CD14-positive monocyte (primary cell): ENCODE measurements at regions of chr2 and their contacts with region 1.

Region 1: DNA sequence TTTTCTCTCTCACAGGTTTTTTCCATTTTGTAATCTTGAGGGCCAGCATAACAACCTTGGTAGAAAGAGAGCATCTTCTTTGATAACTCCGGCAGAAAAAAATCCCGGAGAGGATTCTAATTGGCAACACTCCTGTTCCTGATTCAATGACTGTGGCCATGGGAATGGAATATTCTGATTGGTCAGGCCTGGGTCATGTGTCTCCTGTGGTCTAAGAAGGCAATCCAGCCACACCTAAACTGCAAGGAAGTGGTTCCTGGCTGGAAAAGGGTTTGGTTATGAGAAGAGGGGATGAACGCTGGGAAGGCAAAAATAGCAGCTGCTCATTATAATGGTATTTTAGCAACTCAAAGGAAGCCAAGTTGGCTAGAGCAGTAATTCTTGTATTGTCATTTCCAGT is 24.8 kb upstream of the ZNF638 start:
- DNase-seq: no peak
- H3K4me3 ChIP-seq: no peak overlapping the region
- H3K4me3 Mint-ChIP-seq: no peak overlapping the region
- H3K27ac ChIP-seq: no peak overlapping the region
- H3K27ac Mint-ChIP-seq: no peak overlapping the region
- H3K4me1 ChIP-seq: no peaks in the 10 kb centered on the region
- H3K4me1 Mint-ChIP-seq: no peaks in the 10 kb centered on the region
- H3K27me3 ChIP-seq: no peaks in the 10 kb centered on the region
- H3K27me3 Mint-ChIP-seq: peaks cover 0 to 2% (median 1%) of the 10 kb centered on the region in 3 donors
- CTCF ChIP-seq: no peak

Region 2: DNA sequence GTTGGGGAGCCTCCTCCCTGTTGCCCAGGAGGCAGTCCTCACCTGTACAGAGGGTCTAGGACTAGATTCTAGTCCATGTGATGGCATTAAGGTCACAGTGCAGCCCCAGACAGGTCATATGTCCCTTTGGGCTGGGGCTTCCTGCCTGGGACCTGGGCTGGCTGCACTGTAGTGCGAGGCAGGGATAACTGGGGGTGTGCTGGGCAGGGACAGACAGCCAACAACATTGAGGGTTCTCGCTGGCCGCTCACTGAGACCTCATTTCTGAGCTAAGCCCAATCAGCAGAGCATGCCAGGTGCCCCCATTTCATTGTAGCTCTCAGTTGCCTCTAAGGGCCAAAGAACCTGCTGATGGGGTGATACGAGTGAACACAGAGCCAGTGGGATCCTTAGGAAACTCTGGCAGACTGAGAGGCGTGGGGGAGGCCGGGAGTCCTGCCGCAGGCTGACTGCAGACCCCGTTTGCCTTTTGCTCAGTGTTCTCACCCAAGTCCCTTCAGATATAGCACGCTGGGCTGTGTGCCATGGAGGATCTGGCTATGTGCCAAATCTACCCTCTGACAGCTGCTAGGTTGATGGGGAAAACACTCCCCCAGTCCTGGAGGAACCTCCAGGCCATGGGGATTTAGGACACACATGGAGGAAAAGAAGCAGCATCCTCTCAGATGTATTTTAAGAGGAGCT is 198.5 kb after region 1 on chr2:
- intact Hi-C with region 1: loop called (anchors 5 to 10 kb)
- DNase-seq: no peak
- H3K4me3 ChIP-seq: no peak overlapping the region
- H3K4me3 Mint-ChIP-seq: no peak overlapping the region
- H3K27ac ChIP-seq: no peak overlapping the region
- H3K27ac Mint-ChIP-seq: peak overlapping the region in 1 of 7 donors; percentile 39
- H3K4me1 ChIP-seq: peaks cover under 1 to 4% of the 10 kb centered on the region in 2 donors
- H3K4me1 Mint-ChIP-seq: peaks cover 7% of the 10 kb centered on the region
- H3K27me3 ChIP-seq: no peaks in the 10 kb centered on the region
- H3K27me3 Mint-ChIP-seq: no peaks in the 10 kb centered on the region
- CTCF ChIP-seq: no peak